Activated T-helper 1 cell treated with anti-CD3 and anti-CD28 coated beads, Interleukin-12 subunit alpha, Interleukin-12 subunit beta, Interleukin-2, Interleukin-4 antibody, amounts not matched to agents 30 ng/mL and 10 ng/mL and 1 ng/mL, durations not matched to agents 14 hours and 24 hours and 36 hours (primary cell): ENCODE measurements at regions of chr3 and their contacts with region 1.

Region 1: DNA sequence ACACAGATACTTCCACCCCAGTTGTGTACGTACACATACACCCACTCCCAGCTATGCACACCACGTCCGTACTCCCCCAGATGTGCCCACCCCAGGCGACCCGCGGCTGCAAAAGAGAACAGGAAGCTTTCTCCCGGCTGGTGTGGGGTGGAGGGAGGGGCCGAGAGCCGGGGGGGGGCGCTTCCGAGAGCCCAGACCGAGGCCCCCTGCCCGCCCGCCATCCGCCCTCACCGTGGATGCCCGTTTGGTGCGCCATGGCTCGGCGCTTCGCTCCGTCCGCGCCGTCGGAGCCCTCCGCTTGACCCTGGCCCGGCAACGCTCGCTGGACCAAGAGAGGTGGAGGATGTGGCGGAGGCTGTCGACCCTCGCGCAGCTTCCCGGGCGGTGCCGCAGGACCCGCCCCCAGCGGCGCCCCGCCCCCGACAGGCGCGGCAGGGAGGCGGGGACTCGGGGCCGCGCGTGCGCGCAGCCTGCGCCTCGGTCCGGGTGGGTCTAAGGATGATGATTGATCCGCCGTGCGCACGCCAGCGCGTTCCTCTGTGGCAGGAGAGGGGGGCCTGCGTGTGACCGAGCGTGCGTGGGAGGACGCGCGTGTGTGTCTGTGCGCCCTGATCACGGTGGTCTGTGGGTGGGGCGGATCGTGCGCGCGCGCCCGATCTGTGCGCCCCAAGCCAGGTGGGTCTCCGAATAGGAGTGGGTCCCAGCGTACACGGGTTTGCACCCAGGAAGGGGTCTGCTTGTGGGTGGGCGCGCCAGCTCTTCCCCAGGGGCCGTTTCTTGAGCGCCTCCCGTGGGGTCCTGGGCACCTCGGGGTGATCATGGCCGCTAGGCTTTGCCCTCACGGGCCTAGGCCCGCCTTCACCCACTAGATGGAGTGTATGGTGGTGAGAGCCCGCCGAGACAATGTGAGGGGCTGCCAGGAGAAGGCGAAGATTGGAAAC is at the start of gene TWF2:
- DNase-seq: peak; percentile 87
- H3K4me3 Mint-ChIP-seq: peak within 1 kb of the TSS; percentile 95
- H3K27ac Mint-ChIP-seq: peak within 1 kb of the TSS; percentile 98
- H3K4me1 Mint-ChIP-seq: peaks cover 75% of the 10 kb centered on the region
- H3K27me3 Mint-ChIP-seq: no peaks in the 10 kb centered on the region
- total RNA-seq, gene TWF2: 94.3 and 98.6 TPM in 2 replicates

Region 2: DNA sequence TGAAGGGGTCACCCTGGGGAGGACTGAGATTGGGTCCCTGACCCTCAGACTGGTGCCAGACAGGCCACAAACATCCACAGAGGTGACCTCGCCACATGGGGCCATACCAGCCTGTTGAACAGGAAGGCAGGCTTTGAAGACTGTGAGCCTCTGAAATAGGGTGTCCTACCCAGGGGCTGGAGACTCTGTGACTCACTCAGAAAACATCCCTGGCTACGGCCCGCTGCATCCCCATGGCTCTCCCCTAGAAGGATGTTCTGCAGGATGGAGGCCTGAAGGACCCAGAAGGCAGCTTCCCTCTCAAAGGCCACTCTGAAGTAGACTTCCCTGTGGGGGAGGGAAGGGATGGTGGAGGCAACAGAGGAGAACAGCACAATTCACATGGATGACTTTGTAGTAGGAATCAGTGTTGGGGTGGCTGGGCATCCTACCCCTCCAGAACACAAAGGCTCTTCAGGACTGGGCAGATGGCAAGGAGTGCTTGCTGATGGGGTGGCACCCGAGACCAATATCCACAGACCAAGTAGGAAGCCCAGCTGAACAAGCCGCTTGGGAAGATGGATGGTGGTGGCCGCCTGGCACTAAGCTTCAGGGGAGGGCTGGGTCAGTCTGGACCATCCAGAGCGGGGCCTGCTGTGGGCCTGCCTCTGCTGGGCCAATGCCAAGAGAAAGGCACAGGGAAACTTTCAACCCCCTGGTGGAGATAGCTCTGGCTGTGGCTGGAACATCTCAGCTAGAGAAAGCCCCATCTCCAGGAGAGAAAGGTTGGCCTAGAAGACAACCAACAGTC is 145.1 kb before region 1 on chr3:
- intact Hi-C with region 1: no loop called
- DNase-seq: no peak
- H3K4me3 Mint-ChIP-seq: no peak overlapping the region
- H3K27ac Mint-ChIP-seq: no peak overlapping the region
- H3K4me1 Mint-ChIP-seq: peaks cover 6% of the 10 kb centered on the region
- H3K27me3 Mint-ChIP-seq: no peaks in the 10 kb centered on the region

Region 3: DNA sequence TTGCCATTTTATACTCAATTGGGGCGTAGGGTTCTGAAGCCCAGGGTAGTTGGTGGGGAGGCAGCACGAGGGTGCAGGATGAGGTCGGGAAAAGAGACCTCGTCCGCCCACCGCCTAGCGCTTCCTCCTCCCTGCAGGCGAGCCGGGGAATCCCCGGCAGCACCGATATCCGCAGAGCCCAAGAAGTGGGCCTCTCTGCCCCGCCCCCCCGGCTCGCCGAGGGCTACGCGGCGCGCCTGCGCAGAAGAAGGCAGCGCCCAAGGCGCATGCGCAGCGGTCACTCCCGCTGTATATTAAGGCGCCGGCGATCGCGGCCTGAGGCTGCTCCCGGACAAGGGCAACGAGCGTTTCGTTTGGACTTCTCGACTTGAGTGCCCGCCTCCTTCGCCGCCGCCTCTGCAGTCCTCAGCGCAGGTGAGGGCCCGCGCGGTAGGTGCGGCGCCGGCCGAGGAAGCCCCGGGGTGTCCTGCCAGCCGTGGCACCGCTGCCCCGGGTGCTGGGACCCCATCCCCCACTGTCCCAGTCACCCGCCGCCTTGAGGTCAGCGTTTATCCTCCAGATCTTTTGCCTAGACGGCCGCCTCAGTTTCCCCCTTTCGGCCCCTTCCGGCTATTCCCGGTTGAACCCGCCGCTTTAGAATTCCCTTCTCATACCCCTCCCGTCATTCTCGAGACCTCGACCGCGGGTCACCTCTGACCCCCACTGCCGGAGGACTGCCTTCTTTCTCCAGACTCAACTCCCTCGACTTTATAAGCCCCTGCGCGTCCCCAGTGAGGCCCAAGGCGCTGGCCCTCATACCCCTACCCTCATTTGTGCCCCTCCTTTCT is 41.0 kb before region 1 on chr3 and contains the start of gene ALAS1:
- intact Hi-C with region 1: loop called (anchors 1 kb)
- DNase-seq: peak; percentile 96
- H3K4me3 Mint-ChIP-seq: peak within 1 kb of the TSS; percentile 100
- H3K27ac Mint-ChIP-seq: peak within 1 kb of the TSS; percentile 94
- H3K4me1 Mint-ChIP-seq: peaks cover 63% of the 10 kb centered on the region
- H3K27me3 Mint-ChIP-seq: peaks cover 2% of the 10 kb centered on the region
- total RNA-seq, gene ALAS1: 105 and 110 TPM in 2 replicates

Region 4: GRCh38 chr3:52253314-52254304 is 14.6 kb after region 1 on chr3:
- intact Hi-C with region 1: loop called (anchors 1 kb)
- DNase-seq: peak; percentile 82
- H3K4me3 Mint-ChIP-seq: peak overlapping the region; percentile 86
- H3K27ac Mint-ChIP-seq: peak overlapping the region; percentile 99
- H3K4me1 Mint-ChIP-seq: peaks cover 81% of the 10 kb centered on the region
- H3K27me3 Mint-ChIP-seq: no peaks in the 10 kb centered on the region

Region 5: DNA sequence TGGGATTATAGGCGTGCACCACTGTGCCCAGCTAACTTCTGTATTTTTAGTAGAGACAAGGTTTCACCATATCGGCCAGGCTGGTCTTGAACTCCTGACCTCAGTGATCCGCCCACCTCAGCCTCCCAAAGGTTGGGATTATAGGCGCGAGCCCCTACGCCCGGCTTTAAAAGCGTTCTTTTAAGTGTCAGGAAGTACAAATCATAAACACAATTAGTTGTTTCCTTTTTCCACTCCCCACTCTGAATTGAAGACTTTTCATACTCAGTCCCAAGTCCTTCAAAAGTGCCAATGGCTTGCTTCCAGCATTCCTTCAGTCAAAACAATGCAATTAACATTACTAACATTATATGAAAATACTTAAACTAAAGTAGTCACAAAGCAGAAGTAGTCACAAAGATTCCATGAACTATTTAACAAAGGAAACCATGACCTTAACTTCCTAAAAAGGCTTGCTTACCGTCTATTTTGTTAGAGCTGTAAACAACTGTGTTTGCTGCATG is 31.3 kb after region 1 on chr3:
- intact Hi-C with region 1: loop called (anchors 1 kb)
- DNase-seq: no peak
- H3K4me3 Mint-ChIP-seq: peak overlapping the region; percentile 81
- H3K27ac Mint-ChIP-seq: peak overlapping the region; percentile 88
- H3K4me1 Mint-ChIP-seq: peaks cover 76% of the 10 kb centered on the region
- H3K27me3 Mint-ChIP-seq: no peaks in the 10 kb centered on the region

Region 6: DNA sequence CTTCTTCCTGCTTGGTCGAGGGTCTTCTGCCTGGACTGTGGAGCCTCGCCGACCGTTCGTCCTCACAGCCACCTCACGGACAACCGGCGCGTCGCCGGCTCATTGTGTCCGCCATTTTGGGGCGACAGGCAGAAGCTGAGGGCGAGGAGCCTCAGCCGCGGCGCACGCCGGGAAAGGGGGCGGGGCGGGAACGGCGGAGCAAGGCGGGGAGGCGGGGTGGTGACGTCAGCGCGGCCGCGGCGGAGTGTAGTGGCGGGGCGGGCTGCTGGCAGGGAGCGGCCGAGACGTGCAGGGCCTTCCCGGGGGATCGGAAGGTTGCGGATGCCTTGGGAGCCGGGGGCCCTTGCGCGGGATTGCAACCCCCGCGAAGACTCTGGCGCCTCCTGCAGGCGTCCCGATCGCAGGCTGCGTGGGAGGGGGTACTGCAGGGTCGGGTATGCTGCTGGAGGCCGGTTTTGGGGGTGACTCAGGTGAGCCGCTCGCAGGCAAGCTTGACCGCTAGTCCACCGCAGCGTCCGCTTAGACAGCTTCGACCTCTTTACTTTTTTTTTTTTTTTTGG is 39.6 kb after region 1 on chr3 and contains the start of gene WDR82:
- intact Hi-C with region 1: loop called (anchors 1 kb)
- DNase-seq: peak; percentile 95
- H3K4me3 Mint-ChIP-seq: peak within 1 kb of the TSS; percentile 97
- H3K27ac Mint-ChIP-seq: peak within 1 kb of the TSS; percentile 99
- H3K4me1 Mint-ChIP-seq: peaks cover 70% of the 10 kb centered on the region
- H3K27me3 Mint-ChIP-seq: no peaks in the 10 kb centered on the region
- total RNA-seq, gene WDR82: 105 and 107 TPM in 2 replicates